ENCODE measurements at regions of chr16 and their contacts with region 1.

Region 1: DNA sequence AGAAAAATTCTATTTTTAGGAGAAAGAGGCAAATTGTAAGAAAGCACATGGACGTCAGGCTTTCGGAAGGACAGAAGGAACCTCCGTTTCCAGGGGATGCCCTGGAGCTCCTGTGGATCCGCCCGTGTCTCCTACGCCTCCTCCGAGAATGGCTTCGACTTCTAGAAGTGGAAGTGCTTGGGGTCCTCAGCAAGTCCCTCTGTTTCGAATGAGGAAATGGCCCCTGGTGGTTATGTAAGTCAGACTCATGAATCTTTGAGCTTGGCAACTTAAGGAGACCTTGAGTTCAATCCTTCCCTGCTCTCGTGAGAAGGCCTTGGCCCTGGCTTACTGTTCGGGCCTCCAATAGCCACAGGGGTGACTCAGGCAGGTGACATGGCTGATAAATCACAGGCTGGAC is 38.9 kb downstream of the COX4I1 start:
- DNase-seq: no peak
- H3K4me3 ChIP-seq: no peak overlapping the region
- CTCF ChIP-seq: no peak

Region 2: GRCh38 chr16:85908444-85908843 is 70.1 kb after region 1 on chr16:
- in situ Hi-C with region 1: loop called (anchors 5 kb)
- DNase-seq: no peak
- H3K4me3 ChIP-seq: no peak overlapping the region
- CTCF ChIP-seq: no peak